ENCODE measurements at regions of chr16 and their contacts with region 1.

Region 1: DNA sequence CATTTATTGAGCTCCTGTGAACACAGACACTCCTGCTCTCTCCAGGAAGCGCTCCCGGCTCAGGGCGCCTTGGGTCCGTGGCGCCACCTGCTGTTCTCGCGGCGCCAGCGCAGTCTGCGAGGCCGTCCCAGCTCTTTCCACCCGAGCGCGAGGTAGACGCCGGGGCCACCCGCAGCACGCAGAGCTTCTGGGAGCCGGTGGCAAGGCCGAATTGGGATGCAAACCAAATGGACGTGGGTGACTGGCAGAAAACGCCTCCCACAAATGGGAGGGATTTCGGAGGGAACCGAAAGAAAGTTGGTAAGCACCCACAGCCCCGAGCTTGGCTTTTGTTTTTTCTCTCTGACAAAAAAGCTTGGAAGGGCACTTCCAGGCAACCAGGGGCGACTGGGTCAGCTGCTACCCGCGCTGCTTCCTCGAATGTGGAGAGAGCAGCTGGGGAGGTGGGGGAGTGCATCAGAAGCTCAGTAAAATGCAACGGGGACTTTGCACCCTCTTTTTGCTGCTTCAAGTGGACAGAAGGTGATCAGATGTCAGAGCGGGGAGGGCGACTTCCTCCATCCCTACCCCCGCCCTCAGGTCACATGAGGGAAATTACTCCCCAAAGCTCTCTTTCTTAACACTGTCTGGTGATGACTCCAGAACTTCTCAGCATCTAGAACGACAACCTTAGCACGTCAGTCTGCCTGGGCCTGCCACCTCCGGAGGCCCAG is 13.5 kb upstream of the N4BP1 start:
- DNase-seq: peak; percentile 86 to 93
- H3K4me3 ChIP-seq: peak overlapping the region; percentile 53
- H3K4me3 Mint-ChIP-seq: peak overlapping the region; percentile 73
- H3K27ac Mint-ChIP-seq: peak overlapping the region; percentile 78
- H3K4me1 ChIP-seq: 0 out of 2 replicates have a peak, but pooled peaks cover 4% of the 10 kb centered on the region
- H3K4me1 Mint-ChIP-seq: no peaks in the 10 kb centered on the region
- H3K27me3 ChIP-seq: no peaks in the 10 kb centered on the region
- H3K27me3 Mint-ChIP-seq: no peaks in the 10 kb centered on the region
- CTCF ChIP-seq: peak; percentile 98 to 99

Region 2: GRCh38 chr16:48353565-48354163 is 269.8 kb before region 1 on chr16:
- CTCF ChIA-PET with region 1: no interaction called
- POLR2A ChIA-PET with region 1: interaction called, 6 read pairs
- intact Hi-C with region 1: loop called (anchors 1 kb)
- DNase-seq: peak; percentile 63 to 75
- H3K4me3 ChIP-seq: no peak overlapping the region
- H3K4me3 Mint-ChIP-seq: no peak overlapping the region
- H3K27ac Mint-ChIP-seq: no peak overlapping the region
- H3K4me1 ChIP-seq: no peaks in the 10 kb centered on the region
- H3K4me1 Mint-ChIP-seq: no peaks in the 10 kb centered on the region
- H3K27me3 ChIP-seq: no peaks in the 10 kb centered on the region
- H3K27me3 Mint-ChIP-seq: no peaks in the 10 kb centered on the region
- CTCF ChIP-seq: peak; percentile 83 to 95

Region 3: DNA sequence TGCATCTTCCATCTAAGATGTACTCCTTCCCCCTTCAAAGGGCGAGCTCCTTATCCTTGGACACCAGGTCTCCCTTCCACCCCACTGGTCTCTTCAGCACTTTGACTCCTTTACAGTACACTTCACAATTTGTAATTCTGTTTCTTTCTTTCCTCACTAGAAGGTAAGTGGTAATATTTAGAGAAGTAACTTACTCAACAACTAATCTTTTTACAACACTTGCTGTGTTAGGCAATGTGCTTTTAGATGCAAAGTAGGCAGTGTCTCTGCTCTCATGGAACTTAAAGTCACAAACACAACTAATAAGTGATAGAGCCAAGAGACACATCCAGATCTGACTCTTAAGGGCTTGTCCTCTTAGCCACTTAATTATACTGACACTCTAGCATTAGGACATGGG is 244.6 kb before region 1 on chr16:
- CTCF ChIA-PET with region 1: no interaction called
- POLR2A ChIA-PET with region 1: no interaction called
- intact Hi-C with region 1: no loop called
- DNase-seq: no peak
- H3K4me3 ChIP-seq: no peak overlapping the region
- H3K4me3 Mint-ChIP-seq: no peak overlapping the region
- H3K27ac Mint-ChIP-seq: no peak overlapping the region
- H3K4me1 ChIP-seq: peaks cover 22% of the 10 kb centered on the region; the same call in 1 of the 2 replicates
- H3K4me1 Mint-ChIP-seq: peaks cover 31% of the 10 kb centered on the region
- H3K27me3 ChIP-seq: no peaks in the 10 kb centered on the region
- H3K27me3 Mint-ChIP-seq: no peaks in the 10 kb centered on the region
- CTCF ChIP-seq: no peak

Region 4: DNA sequence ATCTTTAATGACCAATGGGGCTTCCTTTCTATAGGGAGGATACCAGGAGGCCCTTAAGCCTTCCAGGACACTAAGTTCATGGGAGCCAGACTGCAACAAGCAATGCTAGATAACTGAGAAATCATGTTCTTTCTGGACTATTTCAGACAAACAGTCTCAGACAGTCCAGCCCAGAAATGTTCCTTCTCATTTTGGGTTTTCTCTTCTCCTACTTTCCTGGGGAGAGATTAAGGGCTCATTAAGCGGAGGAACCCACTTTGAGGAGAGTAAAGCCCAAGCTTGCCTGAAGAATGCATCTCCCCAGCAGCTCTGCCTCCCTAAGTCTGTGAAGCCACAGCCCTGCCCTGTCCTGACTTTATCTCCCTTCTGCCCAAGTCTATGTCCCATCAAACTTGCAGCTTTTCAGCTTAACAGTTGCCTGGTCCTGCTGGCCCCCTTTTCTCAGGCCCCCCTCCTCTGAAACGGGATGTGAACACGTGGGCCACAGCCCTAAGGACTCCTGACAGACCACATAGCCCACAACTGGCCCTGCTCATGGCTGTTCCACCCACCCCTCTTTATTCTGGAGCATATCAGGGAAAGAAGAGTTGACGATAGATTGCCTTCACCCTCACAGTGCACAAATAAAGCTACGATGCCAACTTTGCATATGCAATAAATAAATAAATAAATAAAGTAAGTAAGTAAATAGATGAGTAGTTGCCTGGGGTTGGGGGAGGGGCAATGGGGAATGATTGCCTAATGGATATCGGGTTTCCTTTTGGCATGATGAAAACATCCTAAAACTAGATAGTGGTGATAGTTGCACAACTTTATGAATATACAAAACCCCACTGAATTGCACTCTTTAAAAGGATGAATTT is 124.5 kb before region 1 on chr16:
- CTCF ChIA-PET with region 1: no interaction called
- POLR2A ChIA-PET with region 1: no interaction called
- intact Hi-C with region 1: no loop called
- DNase-seq: no peak
- H3K4me3 ChIP-seq: no peak overlapping the region
- H3K4me3 Mint-ChIP-seq: no peak overlapping the region
- H3K27ac Mint-ChIP-seq: no peak overlapping the region
- H3K4me1 ChIP-seq: no peaks in the 10 kb centered on the region
- H3K4me1 Mint-ChIP-seq: no peaks in the 10 kb centered on the region
- H3K27me3 ChIP-seq: no peaks in the 10 kb centered on the region
- H3K27me3 Mint-ChIP-seq: no peaks in the 10 kb centered on the region
- CTCF ChIP-seq: no peak

Region 5: GRCh38 chr16:48535831-48536613 is 87.4 kb before region 1 on chr16:
- CTCF ChIA-PET with region 1: interaction called, 25 read pairs
- POLR2A ChIA-PET with region 1: no interaction called
- intact Hi-C with region 1: loop called (anchors 1 kb)
- DNase-seq: no peak
- H3K4me3 ChIP-seq: no peak overlapping the region
- H3K4me3 Mint-ChIP-seq: no peak overlapping the region
- H3K27ac Mint-ChIP-seq: no peak overlapping the region
- H3K4me1 ChIP-seq: no peaks in the 10 kb centered on the region
- H3K4me1 Mint-ChIP-seq: no peaks in the 10 kb centered on the region
- H3K27me3 ChIP-seq: no peaks in the 10 kb centered on the region
- H3K27me3 Mint-ChIP-seq: no peaks in the 10 kb centered on the region
- CTCF ChIP-seq: no peak

Region 6: GRCh38 chr16:48555155-48555554 is 68.3 kb before region 1 on chr16:
- CTCF ChIA-PET with region 1: interaction called, 7 read pairs
- POLR2A ChIA-PET with region 1: no interaction called
- intact Hi-C with region 1: loop called (anchors 2 kb)
- DNase-seq: no peak
- H3K4me3 ChIP-seq: no peak overlapping the region
- H3K4me3 Mint-ChIP-seq: no peak overlapping the region
- H3K27ac Mint-ChIP-seq: no peak overlapping the region
- H3K4me1 ChIP-seq: no peaks in the 10 kb centered on the region
- H3K4me1 Mint-ChIP-seq: no peaks in the 10 kb centered on the region
- H3K27me3 ChIP-seq: no peaks in the 10 kb centered on the region
- H3K27me3 Mint-ChIP-seq: no peaks in the 10 kb centered on the region
- CTCF ChIP-seq: no peak

Region 7: DNA sequence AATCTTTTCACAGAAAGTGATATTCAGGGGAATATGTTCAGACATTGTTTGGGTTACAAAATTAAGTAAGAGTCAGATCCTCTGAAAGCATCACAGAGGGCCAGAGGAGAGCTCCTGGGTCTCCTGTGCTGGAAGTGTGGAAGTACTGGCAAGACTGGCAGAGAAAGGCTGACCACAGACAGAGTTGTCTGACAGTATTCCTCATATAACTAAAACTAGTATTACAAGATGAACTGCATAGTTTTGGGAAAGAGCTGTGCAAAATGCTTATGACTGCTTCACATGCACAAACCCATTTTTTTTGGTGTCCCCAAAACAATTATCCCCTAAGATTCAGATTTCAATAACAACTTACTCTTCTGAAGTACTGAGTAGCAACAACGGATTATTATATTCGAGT is 48.7 kb before region 1 on chr16:
- CTCF ChIA-PET with region 1: interaction called, 10 read pairs
- POLR2A ChIA-PET with region 1: no interaction called
- intact Hi-C with region 1: no loop called
- DNase-seq: no peak
- H3K4me3 ChIP-seq: no peak overlapping the region
- H3K4me3 Mint-ChIP-seq: no peak overlapping the region
- H3K27ac Mint-ChIP-seq: no peak overlapping the region
- H3K4me1 ChIP-seq: peaks cover 22% of the 10 kb centered on the region
- H3K4me1 Mint-ChIP-seq: peaks cover 19% of the 10 kb centered on the region
- H3K27me3 ChIP-seq: no peaks in the 10 kb centered on the region
- H3K27me3 Mint-ChIP-seq: no peaks in the 10 kb centered on the region
- CTCF ChIP-seq: no peak

Region 8: GRCh38 chr16:48609652-48610029 is 13.8 kb before region 1 on chr16:
- CTCF ChIA-PET with region 1: interaction called, 50 read pairs
- POLR2A ChIA-PET with region 1: interaction called, 27 read pairs
- intact Hi-C with region 1: loop called (anchors 1 kb)
- DNase-seq: peak in 1 of 2 experiments; percentile 61
- H3K4me3 ChIP-seq: peak overlapping the region; percentile 95
- H3K4me3 Mint-ChIP-seq: peak overlapping the region; percentile 85
- H3K27ac Mint-ChIP-seq: peak overlapping the region; percentile 98
- H3K4me1 ChIP-seq: peaks cover 54% of the 10 kb centered on the region
- H3K4me1 Mint-ChIP-seq: peaks cover 6% of the 10 kb centered on the region
- H3K27me3 ChIP-seq: no peaks in the 10 kb centered on the region
- H3K27me3 Mint-ChIP-seq: no peaks in the 10 kb centered on the region
- CTCF ChIP-seq: no peak

Measured in Caco-2 (cell line).